Left ventricle myocardium superior (tissue), 1 donor: ENCODE measurements at regions of chr16 and their contacts with region 1.

Region 1: GRCh38 chr16:14529010-14529669 is 100.9 kb downstream of the PARN start:
- DNase-seq: peak; percentile 60
- ATAC-seq: peak; percentile 90

Region 2: GRCh38 chr16:14289706-14290353 is 239.3 kb before region 1 on chr16:
- intact Hi-C with region 1: loop called (anchors 10 kb)
- DNase-seq: no peak
- ATAC-seq: no peak

Region 3: DNA sequence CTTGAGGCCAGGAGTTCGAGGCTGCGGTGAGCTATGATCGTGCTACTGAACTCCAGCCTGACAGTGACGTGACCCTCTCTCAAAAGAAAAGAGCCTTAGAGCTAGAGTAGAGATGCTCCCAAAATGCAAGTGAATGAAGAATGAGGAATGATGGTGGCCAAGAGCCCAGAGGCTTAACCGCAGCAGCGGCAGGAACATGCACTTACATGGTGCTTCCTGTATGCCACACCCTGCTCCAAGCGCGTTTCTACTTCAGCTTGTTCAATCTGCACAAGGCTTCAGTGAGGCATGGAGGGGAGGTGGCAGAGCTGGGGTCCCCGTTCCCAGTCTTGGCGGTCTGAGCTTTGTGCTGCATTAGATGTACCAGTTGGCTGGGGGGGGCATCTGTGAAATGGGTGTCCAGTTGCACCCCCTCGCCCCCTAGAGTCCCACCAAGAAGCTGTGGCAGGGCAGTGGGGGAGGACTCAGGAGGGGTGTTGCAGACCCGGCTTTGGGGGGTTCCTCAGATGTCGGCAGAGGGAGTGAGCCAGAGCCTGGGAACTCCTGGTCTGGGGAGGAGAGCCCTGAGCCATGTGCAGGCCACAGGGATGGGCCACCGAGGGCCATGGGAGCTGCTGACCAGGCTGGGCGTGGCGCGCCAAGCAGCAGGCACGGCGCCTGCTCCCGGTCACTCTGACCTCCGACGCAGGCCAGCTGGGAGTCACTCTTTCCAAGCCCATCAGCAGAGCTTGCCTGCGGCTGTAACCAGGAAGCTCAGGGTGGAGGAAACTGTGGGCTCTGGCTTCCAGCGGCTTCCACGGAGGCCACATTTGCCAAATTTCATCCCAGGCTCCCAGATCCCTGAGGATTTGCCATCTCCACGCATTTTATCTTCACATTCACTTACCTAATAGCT is 159.2 kb before region 1 on chr16:
- intact Hi-C with region 1: no loop called
- DNase-seq: peak; percentile 76
- ATAC-seq: peak; percentile 87

Region 4: GRCh38 chr16:14586637-14587305 is 57.6 kb after region 1 on chr16:
- intact Hi-C with region 1: no loop called
- DNase-seq: no peak
- ATAC-seq: no peak